HEK293 (cell line): ENCODE measurements at regions of chr2 and their contacts with region 1.

Region 1: GRCh38 chr2:32559136-32559535 is 68.7 kb upstream of the TTC27 start:
- H3K4me3 ChIP-seq: no peak overlapping the region
- H3K27ac ChIP-seq: no peak overlapping the region
- H3K4me1 ChIP-seq: no peaks in the 10 kb centered on the region
- CTCF ChIP-seq: no peak

Region 2: GRCh38 chr2:32135409-32135808 is 423.7 kb before region 1 on chr2:
- CTCF ChIA-PET with region 1: interaction called, 10 read pairs
- POLR2A ChIA-PET with region 1: no interaction called
- H3K4me3 ChIP-seq: no peak overlapping the region
- H3K27ac ChIP-seq: no peak overlapping the region
- H3K4me1 ChIP-seq: no peaks in the 10 kb centered on the region
- CTCF ChIP-seq: no peak